Sigmoid colon (tissue), 7 donors: ENCODE measurements at regions of chr3 and their contacts with region 1.

Region 1: GRCh38 chr3:46923559-46924350 is 46.2 kb downstream of the PTH1R start:
- DNase-seq: peak; percentile 64
- H3K4me3 ChIP-seq: no peak overlapping the region
- H3K27ac ChIP-seq: no peak overlapping the region
- H3K4me1 ChIP-seq: peaks cover 0 to 53% (median 40%) of the 10 kb centered on the region in 4 donors
- H3K27me3 ChIP-seq: no peaks in the 10 kb centered on the region
- CTCF ChIP-seq: peak; percentile 30 to 76 (median 72)
- EP300 ChIP-seq: no peak
- POLR2A ChIP-seq: no peak

Region 2: GRCh38 chr3:46882377-46883053 is 41.2 kb before region 1 on chr3:
- intact Hi-C with region 1: no loop called
- DNase-seq: peak; percentile 77
- H3K4me3 ChIP-seq: peak overlapping the region; percentile 47 to 81 (median 54)
- H3K27ac ChIP-seq: peak overlapping the region; percentile 64 to 86 (median 76)
- H3K4me1 ChIP-seq: peaks cover 0 to 55% (median 34%) of the 10 kb centered on the region in 4 donors
- H3K27me3 ChIP-seq: peaks cover 21 to 35% (median 21%) of the 10 kb centered on the region in 3 donors
- CTCF ChIP-seq: no peak
- EP300 ChIP-seq: no peak
- POLR2A ChIP-seq: no peak

Region 3: DNA sequence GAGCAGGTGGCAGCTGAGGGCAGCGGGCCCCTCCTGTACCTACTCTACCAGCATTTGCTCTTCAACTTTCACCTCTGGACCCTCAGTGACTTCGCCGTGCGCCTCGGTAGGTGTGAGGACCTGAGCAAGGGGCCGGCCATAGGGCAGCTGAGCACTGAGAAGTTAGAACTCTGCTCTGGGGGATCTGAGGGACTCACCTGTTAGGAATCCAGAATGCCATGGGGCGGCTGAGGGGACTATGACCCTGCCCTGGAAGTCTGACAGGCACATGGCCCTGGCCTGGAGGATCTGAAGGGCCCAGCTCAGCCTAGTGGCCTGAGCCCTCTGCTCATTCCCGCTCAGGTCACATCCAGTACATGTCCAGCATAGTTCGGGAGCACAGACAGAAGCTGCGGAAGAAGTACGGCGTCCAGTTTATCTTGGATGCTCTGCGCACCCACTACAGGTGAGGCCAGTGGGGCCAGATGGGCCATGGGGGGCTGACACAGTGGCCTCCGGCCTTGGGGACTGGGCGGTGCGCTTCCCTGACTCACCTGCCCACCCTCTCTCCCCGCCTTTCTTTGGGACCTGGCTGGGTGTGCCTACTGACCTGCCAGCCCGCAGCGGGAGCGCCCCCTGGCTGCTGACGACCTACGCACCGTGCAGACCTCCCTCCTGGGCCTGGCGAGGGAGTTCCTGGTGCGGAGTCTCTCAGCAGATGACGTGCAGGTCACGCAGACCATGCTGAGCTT is 74.5 kb after region 1 on chr3:
- intact Hi-C with region 1: loop called (anchors 1 kb)
- DNase-seq: no peak
- H3K4me3 ChIP-seq: no peak overlapping the region
- H3K27ac ChIP-seq: no peak overlapping the region
- H3K4me1 ChIP-seq: no peaks in the 10 kb centered on the region
- H3K27me3 ChIP-seq: no peaks in the 10 kb centered on the region
- CTCF ChIP-seq: peak; percentile 59 to 85 (median 77)
- EP300 ChIP-seq: no peak
- POLR2A ChIP-seq: no peak